Activated naive CD4-positive, alpha-beta T cell treated with anti-CD3 and anti-CD28 coated beads, Interleukin-2, amount 10 ng/mL, durations not matched to agents 7 days and 5 days (primary cell): ENCODE measurements at regions of chr5 and their contacts with region 1.

Region 1: GRCh38 chr5:179801274-179802245 is 5.1 kb downstream of the MGAT4B start:
- DNase-seq: peak; percentile 90
- H3K4me3 Mint-ChIP-seq: no peak overlapping the region
- H3K27ac Mint-ChIP-seq: peak overlapping the region; percentile 42
- H3K4me1 Mint-ChIP-seq: peaks cover 33% of the 10 kb centered on the region
- H3K27me3 Mint-ChIP-seq: peaks cover 4% of the 10 kb centered on the region

Region 2: DNA sequence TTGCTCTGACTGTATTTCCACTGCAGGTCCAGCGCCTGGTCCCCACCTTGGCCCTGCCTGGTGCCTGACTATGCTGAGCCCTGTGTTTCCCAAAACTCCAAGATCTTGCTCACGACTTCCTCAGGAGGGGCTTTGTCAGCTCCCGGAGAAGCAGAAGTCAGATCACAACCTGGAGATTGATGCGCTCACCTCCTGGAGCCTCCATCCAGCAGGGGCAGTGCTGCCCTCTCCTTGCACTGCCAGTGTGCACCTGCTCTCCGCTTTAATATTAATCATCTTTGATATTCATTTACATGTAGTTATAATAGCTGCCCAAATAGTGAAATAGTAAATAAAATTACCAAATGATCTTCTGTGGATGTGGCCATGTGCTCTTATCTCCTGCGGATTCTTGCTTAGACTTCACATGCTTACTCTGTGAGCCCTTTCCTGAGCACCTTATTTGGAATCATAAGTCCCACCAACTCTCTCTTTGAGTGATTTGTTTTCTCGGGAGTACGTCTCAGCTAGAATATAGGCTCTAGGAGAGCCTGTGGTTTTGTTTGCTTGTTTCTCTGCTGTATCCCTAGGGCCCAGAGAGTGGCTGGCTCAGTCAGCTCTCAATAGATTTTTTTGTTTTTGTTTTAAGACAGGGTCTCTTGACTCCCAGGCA is 51.6 kb before region 1 on chr5:
- CTCF ChIA-PET with region 1: no interaction called
- DNase-seq: no peak
- H3K4me3 Mint-ChIP-seq: no peak overlapping the region
- H3K27ac Mint-ChIP-seq: no peak overlapping the region
- H3K4me1 Mint-ChIP-seq: peaks cover 22% of the 10 kb centered on the region
- H3K27me3 Mint-ChIP-seq: no peaks in the 10 kb centered on the region

Region 3: GRCh38 chr5:179763215-179763945 is 38.2 kb before region 1 on chr5:
- CTCF ChIA-PET with region 1: interaction called, 32 read pairs
- DNase-seq: peak; percentile 69
- H3K4me3 Mint-ChIP-seq: no peak overlapping the region
- H3K27ac Mint-ChIP-seq: no peak overlapping the region
- H3K4me1 Mint-ChIP-seq: peaks cover 48% of the 10 kb centered on the region
- H3K27me3 Mint-ChIP-seq: no peaks in the 10 kb centered on the region

Region 4: GRCh38 chr5:179820737-179821580 is 19.4 kb after region 1 on chr5 and contains the start of gene SQSTM1:
- CTCF ChIA-PET with region 1: interaction called, 12 read pairs
- DNase-seq: peak; percentile 83
- H3K4me3 Mint-ChIP-seq: peak within 1 kb of the TSS; percentile 91
- H3K27ac Mint-ChIP-seq: peak within 1 kb of the TSS; percentile 98
- H3K4me1 Mint-ChIP-seq: peaks cover 50% of the 10 kb centered on the region
- H3K27me3 Mint-ChIP-seq: peaks cover 14% of the 10 kb centered on the region

Region 5: GRCh38 chr5:179836225-179837019 is 34.9 kb after region 1 on chr5:
- CTCF ChIA-PET with region 1: interaction called, 12 read pairs
- DNase-seq: peak; percentile 79
- H3K4me3 Mint-ChIP-seq: peak overlapping the region; percentile 9
- H3K27ac Mint-ChIP-seq: peak overlapping the region; percentile 89
- H3K4me1 Mint-ChIP-seq: peaks cover 16% of the 10 kb centered on the region
- H3K27me3 Mint-ChIP-seq: no peaks in the 10 kb centered on the region

Region 6: GRCh38 chr5:179907570-179908324 is 106.2 kb after region 1 on chr5 and contains the start of gene TBC1D9B:
- CTCF ChIA-PET with region 1: interaction called, 36 read pairs
- DNase-seq: peak; percentile 78
- H3K4me3 Mint-ChIP-seq: peak within 1 kb of the TSS; percentile 89
- H3K27ac Mint-ChIP-seq: peak within 1 kb of the TSS; percentile 82
- H3K4me1 Mint-ChIP-seq: peaks cover 19% of the 10 kb centered on the region
- H3K27me3 Mint-ChIP-seq: peaks cover 9% of the 10 kb centered on the region

Region 7: DNA sequence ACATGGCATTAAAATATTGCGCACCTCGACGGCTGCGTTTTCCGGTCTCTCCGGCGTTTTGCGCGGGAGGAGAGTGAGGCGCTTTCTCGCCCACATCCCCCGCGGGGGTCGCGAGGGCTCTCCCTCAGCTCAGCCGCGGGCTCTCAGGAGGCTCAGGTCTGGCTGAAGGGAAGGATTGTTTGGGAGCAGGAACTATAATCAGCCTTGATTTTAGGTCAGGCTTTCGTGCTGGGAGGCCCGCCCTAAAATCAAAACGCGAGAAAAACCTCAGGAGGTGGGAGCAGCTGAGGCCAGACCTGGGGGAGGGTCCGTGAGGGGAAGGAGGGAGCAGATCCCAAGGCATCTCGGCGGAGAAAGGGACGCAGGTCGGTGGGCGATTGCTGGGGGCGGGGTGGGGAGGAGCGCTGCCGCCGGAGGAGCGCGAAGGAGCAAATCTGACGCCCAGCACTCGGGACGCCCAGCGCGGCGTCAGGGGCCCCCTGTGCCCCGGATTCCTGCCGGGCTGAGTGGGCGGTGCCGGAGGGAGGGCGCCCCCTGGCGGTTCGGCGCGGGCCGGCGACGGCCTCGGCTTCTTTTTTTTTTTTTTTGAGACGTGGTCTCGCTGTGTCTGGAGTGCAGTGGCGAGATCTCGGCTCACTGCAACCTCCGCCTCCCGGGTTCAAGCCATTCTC is 288.7 kb after region 1 on chr5:
- CTCF ChIA-PET with region 1: interaction called, 16 read pairs
- DNase-seq: peak; percentile 79
- H3K4me3 Mint-ChIP-seq: peak overlapping the region; percentile 73
- H3K27ac Mint-ChIP-seq: peak overlapping the region; percentile 55
- H3K4me1 Mint-ChIP-seq: peaks cover 25% of the 10 kb centered on the region
- H3K27me3 Mint-ChIP-seq: peaks cover 18% of the 10 kb centered on the region